Heart right ventricle (tissue), 16 donors: ENCODE measurements at regions of chr4 and their contacts with region 1.

Region 1: DNA sequence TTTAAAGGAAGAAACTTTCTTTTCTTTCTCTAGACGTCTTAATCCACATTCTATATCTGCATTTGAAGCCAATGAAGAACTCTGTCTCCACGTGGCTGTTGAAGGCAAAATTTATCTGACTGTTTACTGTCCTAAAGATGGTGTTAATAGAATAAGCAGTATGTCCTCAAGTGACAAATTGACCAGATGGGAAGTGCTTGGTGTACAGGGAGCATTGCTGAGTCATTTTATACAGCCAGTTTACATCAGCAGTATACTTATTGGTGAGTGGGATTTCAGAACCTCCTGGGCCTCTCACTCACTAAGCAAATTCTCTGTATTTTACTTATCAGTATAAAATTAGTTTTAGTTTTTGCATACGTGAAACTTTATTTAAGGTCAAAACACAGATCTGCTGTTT is 33.7 kb downstream of the ADAD1 start:
- DNase-seq: no peak
- ATAC-seq: no peak
- H3K4me3 ChIP-seq: no peak overlapping the region
- H3K27ac ChIP-seq: no peak overlapping the region
- H3K4me1 ChIP-seq: no peaks in the 10 kb centered on the region
- H3K27me3 ChIP-seq: no peaks in the 10 kb centered on the region
- CTCF ChIP-seq: no peak

Region 2: DNA sequence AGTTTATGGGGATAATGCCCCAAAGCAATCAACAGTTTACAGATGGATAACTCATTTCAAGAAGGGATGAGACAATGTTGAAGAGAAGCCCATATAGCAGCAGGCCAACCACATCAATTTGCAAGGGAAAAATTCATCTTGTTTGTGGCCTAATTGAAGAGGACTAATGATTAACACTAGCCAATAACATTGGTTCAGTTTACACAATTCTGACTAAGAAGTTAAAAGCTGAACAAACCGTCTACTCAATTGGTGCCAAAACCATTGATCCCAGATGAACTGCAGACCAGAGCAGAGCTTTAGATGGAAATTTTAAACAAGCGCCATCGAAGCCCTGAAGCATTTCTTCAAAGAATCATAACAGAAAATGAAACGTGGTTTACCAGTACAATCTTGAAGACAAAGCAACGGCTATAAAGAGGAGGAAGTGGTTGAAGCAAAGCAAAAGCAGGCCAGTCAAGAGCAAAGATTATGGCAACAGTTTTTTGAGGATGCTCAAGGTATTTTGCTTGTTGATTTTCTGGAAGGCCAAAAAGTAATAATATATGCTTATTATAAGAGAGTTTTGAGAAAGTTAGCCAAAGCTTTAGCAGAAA is 280.9 kb before region 1 on chr4:
- intact Hi-C with region 1: loop called in 1 of 10 experiments (anchors 5 kb)
- DNase-seq: no peak
- ATAC-seq: no peak
- H3K4me3 ChIP-seq: no peak overlapping the region
- H3K27ac ChIP-seq: no peak overlapping the region
- H3K4me1 ChIP-seq: no peaks in the 10 kb centered on the region
- H3K27me3 ChIP-seq: no peaks in the 10 kb centered on the region
- CTCF ChIP-seq: no peak